ENCODE measurements at regions of chr10 and their contacts with region 1.

Region 1: DNA sequence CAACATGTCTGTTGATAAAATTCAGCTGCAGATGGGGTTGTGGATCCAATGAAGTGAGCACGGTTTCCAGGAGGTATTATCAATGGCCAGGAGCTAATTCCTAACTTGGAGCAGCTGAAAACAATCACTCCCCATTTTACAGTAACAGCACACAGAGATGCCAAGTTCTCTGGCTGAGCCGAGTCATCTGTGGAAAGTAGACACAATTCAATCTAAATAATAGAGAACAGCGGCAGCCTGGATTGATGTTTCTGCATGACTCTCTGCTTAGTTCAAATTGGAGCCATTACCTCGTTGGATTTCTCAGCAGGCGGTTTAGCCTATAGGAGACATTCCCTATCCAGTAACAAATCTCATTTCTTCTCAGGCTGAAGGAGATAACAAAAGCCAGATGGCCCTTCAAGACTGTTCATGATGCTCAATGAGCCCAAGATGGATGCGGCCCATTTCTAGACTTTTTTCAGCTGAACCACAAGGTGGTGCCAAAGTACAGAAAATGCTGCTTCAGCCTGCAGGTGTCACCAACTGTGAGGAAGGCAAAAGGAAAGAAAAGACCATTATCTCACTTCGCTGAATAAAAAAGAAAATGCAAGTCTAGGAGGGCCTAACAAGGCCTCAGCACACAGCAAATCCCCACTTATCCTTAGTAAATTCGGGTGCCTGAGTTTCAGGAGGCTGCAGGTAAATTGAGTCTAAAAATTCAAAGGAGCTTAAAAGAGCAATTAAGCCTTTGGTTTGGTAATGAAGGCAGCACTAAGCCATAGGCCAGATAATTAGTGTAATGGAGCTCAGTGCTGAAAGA is 83.7 kb downstream of the SLC16A9 start:
- DNase-seq: peak; percentile 12
- H3K4me3 ChIP-seq: no peak overlapping the region
- CTCF ChIP-seq: peak; percentile 71

Region 2: DNA sequence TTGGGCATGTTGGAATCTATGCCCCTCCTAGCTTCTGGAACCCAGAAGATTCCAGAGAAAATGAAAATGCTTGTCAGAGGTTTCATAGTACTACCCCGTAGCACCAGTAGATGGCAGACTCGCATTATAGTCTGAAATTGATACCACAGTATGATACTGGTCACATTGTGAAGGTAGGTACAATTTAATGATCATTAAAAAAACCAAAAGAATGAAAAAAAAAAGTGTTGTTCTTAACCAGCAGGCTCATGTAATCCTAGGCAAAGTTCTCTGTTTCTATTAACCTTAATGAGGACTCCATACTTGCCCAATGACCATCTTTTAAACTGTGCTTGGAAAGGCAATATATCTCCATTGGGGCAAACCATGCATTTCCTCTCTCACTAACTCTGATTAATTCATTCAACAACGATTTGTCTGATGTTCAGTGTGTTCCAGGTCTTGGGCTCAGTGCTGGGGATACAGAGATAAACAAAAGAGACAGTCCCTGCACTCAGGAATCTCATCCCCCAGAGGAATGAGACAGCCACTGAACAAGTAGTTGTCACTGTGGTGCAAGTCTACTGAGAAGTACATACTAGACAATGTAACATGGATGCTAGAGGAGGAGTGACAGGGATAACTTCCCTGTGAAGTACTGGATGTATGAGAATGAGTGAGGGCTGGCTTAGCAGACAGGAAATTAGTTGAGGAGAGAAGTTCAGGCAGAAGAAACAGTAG is 673.0 kb before region 1 on chr10:
- CTCF ChIA-PET with region 1: interaction called, 17 read pairs
- POLR2A ChIA-PET with region 1: no interaction called
- DNase-seq: no peak
- H3K4me3 ChIP-seq: no peak overlapping the region
- CTCF ChIP-seq: peak; percentile 63

Region 3: GRCh38 chr10:59265141-59265540 is 360.8 kb before region 1 on chr10:
- CTCF ChIA-PET with region 1: no interaction called
- POLR2A ChIA-PET with region 1: no interaction called
- DNase-seq: no peak
- H3K4me3 ChIP-seq: no peak overlapping the region
- CTCF ChIP-seq: no peak

Region 4: DNA sequence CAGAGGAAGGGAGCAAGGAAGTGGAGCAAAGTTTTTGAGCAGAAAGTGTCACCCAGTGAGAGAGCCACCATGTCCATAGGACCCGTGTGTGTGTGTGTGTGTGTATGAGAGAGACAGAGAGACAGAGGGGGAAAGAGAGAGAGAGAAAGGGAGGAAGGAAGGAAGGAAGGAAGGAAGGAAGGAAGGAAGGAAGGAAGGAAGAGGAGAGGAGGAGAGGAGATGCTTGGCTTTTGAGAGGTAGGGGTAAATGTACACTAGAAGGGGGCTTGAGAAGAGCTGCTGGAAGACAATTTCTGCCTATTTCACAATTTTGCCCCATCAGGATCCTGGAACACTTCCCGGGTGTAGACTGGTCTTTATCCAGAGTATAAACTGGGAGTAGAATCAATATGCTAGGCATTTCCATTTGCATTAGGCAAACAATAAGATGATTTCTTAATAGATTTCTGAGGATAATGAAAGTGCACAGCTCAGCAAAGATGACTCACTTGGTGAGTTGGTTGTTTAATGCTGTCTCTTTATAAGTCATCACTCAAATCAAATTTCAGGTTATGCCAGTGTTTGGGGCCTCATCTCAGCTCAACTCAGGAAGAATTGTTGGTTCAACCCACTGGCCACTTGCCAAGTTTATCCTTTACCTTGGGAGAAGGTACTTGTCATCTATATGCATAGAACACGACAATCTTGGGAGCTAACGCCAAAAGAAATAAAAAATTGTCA is 193.6 kb before region 1 on chr10:
- CTCF ChIA-PET with region 1: no interaction called
- POLR2A ChIA-PET with region 1: no interaction called
- DNase-seq: no peak
- H3K4me3 ChIP-seq: no peak overlapping the region
- CTCF ChIP-seq: no peak

Region 5: GRCh38 chr10:59611043-59611442 is 14.9 kb before region 1 on chr10:
- CTCF ChIA-PET with region 1: interaction called, 18 read pairs
- POLR2A ChIA-PET with region 1: no interaction called
- DNase-seq: no peak
- H3K4me3 ChIP-seq: no peak overlapping the region
- CTCF ChIP-seq: no peak

Region 6: DNA sequence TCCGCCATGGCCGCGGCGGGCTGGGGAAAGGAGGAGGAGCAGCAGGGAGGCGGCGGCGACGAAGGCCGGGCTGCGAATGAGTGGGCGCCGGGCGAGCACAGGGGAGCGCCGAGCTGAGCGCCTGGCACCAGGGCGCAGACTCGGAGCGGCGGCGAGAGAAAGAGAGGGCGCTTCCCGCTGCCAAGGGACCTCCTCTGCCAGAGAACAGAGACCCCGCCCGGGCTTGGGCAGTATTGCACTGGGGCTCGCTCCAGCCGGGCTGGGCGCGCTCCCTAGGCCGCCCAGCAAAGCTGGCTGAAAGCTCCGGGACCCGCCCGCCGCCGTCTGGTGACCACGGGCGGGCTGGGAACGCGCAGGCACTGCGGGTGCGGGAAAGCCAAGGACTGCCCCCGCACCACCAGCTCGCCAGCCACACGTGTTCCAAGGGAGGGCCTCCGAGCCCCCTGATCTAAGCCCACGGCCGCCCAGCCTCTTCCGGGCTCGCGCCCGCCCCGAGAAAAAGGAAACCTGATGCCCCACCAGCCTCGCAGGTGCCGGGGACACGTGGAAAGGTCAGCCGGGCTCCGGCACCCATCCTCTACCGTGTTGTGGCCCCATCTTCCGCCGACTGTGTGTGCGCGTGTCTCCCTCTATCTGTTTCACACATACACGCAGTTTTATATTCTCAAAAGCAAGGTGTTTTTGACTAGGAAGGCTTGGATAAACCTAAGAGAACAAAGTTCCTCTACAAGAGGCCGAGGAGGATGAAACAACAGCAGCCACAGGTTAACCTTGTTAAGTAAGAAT is 280.7 kb after region 1 on chr10 and contains the start of gene CCDC6:
- CTCF ChIA-PET with region 1: interaction called, 11 read pairs
- POLR2A ChIA-PET with region 1: no interaction called
- DNase-seq: peak; percentile 49
- H3K4me3 ChIP-seq: peak within 1 kb of the TSS; percentile 91
- CTCF ChIP-seq: peak; percentile 88

Region 7: DNA sequence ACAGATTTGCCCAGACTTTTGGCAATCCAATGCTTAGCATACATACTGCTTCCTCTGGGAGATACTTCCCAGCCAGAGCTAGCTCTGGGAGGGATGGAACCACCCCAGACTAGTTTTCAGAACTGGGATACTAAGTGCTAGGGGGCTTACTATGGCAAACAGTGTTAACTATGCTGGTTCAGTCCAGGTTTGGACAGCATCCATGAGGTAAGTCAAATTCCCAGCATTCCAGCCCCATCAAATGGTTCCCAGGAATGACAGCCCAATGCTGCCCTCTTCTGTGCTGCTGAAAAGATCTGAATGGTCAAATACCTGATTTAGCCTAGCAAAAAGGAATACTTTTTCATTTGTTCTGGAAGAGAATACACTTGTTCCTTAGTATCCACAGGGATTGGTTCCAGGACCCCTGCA is 422.2 kb after region 1 on chr10:
- CTCF ChIA-PET with region 1: interaction called, 32 read pairs
- POLR2A ChIA-PET with region 1: no interaction called
- DNase-seq: no peak
- H3K4me3 ChIP-seq: no peak overlapping the region
- CTCF ChIP-seq: peak; percentile 41

Measured in AG04449 (cell line).